ENCODE measurements at regions of chr1 and their contacts with region 1.

Region 1: GRCh38 chr1:117612517-117613248 is 6.8 kb downstream of the TENT5C start:
- DNase-seq: peak; percentile 15
- ATAC-seq: peak; percentile 38
- H3K4me3 Mint-ChIP-seq: peak overlapping the region; percentile 56
- H3K27ac Mint-ChIP-seq: peak overlapping the region; percentile 81
- H3K4me1 Mint-ChIP-seq: peaks cover 98% of the 10 kb centered on the region
- H3K27me3 Mint-ChIP-seq: no peaks in the 10 kb centered on the region
- CTCF ChIP-seq: no peak

Region 2: GRCh38 chr1:117654493-117655219 is 42.0 kb after region 1 on chr1:
- CTCF ChIA-PET with region 1: interaction called, 3 read pairs
- POLR2A ChIA-PET with region 1: interaction called, 1,269 read pairs
- intact Hi-C with region 1: loop called (anchors 1 kb)
- DNase-seq: peak; percentile 35
- ATAC-seq: peak; percentile 67
- H3K4me3 Mint-ChIP-seq: peak overlapping the region; percentile 49
- H3K27ac Mint-ChIP-seq: peak overlapping the region; percentile 93
- H3K4me1 Mint-ChIP-seq: peaks cover 92% of the 10 kb centered on the region
- H3K27me3 Mint-ChIP-seq: no peaks in the 10 kb centered on the region
- CTCF ChIP-seq: no peak

Region 3: DNA sequence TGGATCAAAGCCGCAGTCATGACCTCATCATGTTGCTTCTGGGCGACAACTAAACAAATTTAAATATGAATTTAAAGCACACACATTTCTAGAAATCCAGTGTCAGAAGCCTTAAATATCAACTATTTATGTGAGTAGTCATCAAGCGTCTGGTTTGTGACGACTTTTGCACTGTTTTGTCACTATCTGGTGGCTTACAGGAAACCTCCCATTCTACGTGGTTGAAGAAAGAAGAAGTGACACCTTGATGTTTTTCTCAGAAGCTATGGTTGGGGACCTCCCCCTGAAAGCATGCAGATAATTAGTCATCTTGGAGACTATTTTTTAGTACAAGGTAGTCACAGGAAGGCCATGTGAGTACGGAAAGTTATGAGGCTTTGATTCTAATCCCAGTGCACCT is 51.6 kb after region 1 on chr1:
- CTCF ChIA-PET with region 1: interaction called, 6 read pairs
- POLR2A ChIA-PET with region 1: interaction called, 1,269 read pairs
- intact Hi-C with region 1: loop called (anchors 1 kb)
- DNase-seq: no peak
- ATAC-seq: peak; percentile 87
- H3K4me3 Mint-ChIP-seq: peak overlapping the region; percentile 44
- H3K27ac Mint-ChIP-seq: peak overlapping the region; percentile 93
- H3K4me1 Mint-ChIP-seq: peaks cover 83% of the 10 kb centered on the region
- H3K27me3 Mint-ChIP-seq: no peaks in the 10 kb centered on the region
- CTCF ChIP-seq: no peak

Region 4: DNA sequence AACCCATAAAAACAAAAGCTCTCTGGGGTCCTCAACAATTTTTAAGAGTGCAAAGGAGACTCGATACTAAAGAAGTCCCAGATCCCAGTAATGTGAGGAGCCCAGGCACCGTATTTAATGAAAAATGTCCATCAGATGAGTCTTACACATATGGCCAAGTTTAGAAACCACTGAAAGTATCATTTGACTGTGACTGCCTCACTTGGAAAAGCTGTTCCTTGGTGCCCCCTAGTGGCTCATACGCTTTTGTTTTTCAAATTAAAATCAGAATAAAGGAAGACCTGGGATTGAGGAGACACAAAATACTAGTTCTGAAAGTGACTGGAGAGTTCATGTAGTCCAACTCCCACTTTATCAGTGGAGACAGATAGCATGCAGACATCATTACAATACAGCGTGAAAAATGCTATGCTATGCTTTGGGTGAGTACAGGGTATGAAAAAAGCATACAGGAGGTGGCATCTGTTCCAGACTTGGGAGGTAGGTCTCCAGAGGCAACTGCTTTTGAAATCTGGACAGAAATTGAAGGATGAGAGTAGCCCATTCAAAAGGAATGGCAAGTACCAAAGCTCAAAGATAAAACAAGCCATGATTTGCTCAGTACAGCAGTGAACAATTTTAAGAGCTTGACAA is 282.9 kb after region 1 on chr1:
- CTCF ChIA-PET with region 1: no interaction called
- POLR2A ChIA-PET with region 1: no interaction called
- intact Hi-C with region 1: no loop called
- DNase-seq: no peak
- ATAC-seq: peak; percentile 68
- H3K4me3 Mint-ChIP-seq: no peak overlapping the region
- H3K27ac Mint-ChIP-seq: no peak overlapping the region
- H3K4me1 Mint-ChIP-seq: no peaks in the 10 kb centered on the region
- H3K27me3 Mint-ChIP-seq: no peaks in the 10 kb centered on the region
- CTCF ChIP-seq: peak; percentile 34